ENCODE measurements at regions of chr11 and their contacts with region 1.

Region 1: GRCh38 chr11:12043959-12044819 is 35.8 kb upstream of the DKK3 start:
- DNase-seq: peak; percentile 73
- H3K4me3 ChIP-seq: no peak overlapping the region
- H3K27ac ChIP-seq: peak overlapping the region; percentile 36 to 66 (median 40)
- H3K4me1 ChIP-seq: peaks cover 0 to 15% (median 9%) of the 10 kb centered on the region in 4 donors
- H3K27me3 ChIP-seq: no peaks in the 10 kb centered on the region
- CTCF ChIP-seq: peak; percentile 87 to 96 (median 88)
- EP300 ChIP-seq: peak; percentile 50
- POLR2A ChIP-seq: no peak

Region 2: GRCh38 chr11:11813288-11813962 is 230.8 kb before region 1 on chr11:
- in situ Hi-C with region 1: loop called in 1 of 4 experiments (anchors 25 kb)
- intact Hi-C with region 1: no loop called
- DNase-seq: peak; percentile 24
- H3K4me3 ChIP-seq: no peak overlapping the region
- H3K27ac ChIP-seq: peak overlapping the region; percentile 4 to 72 (median 60)
- H3K4me1 ChIP-seq: peaks cover 0 to 5% (median 1%) of the 10 kb centered on the region in 4 donors
- H3K27me3 ChIP-seq: no peaks in the 10 kb centered on the region
- CTCF ChIP-seq: no peak
- EP300 ChIP-seq: no peak
- POLR2A ChIP-seq: no peak

Region 3: DNA sequence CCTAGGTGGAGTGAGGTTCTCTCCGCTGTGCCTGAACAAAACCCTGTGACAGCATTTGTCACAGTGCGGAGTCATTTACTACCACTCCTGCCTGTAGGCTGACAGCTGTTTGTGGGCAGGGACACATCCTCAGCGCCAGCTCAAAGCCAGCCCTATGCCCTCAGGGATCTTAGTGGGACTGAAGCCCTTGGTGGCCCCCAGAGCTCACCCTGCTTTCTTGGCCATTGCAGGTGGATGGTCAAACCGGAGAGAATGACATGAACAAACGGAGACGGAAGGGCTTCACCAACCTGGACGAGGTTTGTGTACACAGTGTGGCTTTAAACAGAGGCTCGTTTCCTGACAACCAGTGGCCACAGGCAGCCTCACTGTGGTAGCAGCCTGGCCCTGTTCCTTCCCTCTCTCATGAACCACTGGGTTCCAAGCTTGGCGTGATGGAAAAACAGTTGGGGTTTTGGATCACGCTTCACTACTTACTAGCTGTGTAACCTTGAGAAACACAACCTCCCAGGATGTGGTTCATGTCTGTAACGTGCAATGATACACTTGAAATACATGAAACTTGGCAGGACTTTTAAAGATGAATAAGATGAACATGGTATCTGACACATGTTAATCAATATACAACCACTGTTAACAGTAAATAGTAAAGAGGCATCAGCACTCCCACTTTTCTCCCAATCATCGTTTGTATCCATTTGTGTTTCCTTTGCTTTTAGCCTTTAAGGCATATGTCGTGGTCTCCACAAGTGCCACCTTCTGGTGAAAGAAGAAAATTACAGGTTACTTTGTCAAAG is 192.0 kb after region 1 on chr11:
- in situ Hi-C with region 1: loop called in 1 of 4 experiments (anchors 5 kb)
- intact Hi-C with region 1: no loop called
- DNase-seq: peak; percentile 32
- H3K4me3 ChIP-seq: no peak overlapping the region
- H3K27ac ChIP-seq: peak overlapping the region; percentile 49 to 80 (median 73)
- H3K4me1 ChIP-seq: peaks cover 10 to 42% (median 20%) of the 10 kb centered on the region in 4 donors
- H3K27me3 ChIP-seq: no peaks in the 10 kb centered on the region
- CTCF ChIP-seq: peak; percentile 58 to 83 (median 69)
- EP300 ChIP-seq: no peak
- POLR2A ChIP-seq: no peak

Region 4: GRCh38 chr11:12281571-12282478 is 237.6 kb after region 1 on chr11:
- in situ Hi-C with region 1: loop called in 3 of 4 experiments (anchors 5 kb)
- intact Hi-C with region 1: loop called (anchors 2 kb)
- DNase-seq: peak; percentile 87
- H3K4me3 ChIP-seq: no peak overlapping the region
- H3K27ac ChIP-seq: no peak overlapping the region
- H3K4me1 ChIP-seq: peaks cover 0 to 30% (median 5%) of the 10 kb centered on the region in 4 donors
- H3K27me3 ChIP-seq: no peaks in the 10 kb centered on the region
- CTCF ChIP-seq: peak; percentile 94 to 99 (median 97)
- EP300 ChIP-seq: no peak
- POLR2A ChIP-seq: no peak

Measured in transverse colon (tissue), 4 donors.